ENCODE measurements at regions of chr6 and their contacts with region 1.

Region 1: GRCh38 chr6:31143148-31143547 is 4.3 kb upstream of the PSORS1C2 start:
- DNase-seq: peak; percentile 89

Region 2: DNA sequence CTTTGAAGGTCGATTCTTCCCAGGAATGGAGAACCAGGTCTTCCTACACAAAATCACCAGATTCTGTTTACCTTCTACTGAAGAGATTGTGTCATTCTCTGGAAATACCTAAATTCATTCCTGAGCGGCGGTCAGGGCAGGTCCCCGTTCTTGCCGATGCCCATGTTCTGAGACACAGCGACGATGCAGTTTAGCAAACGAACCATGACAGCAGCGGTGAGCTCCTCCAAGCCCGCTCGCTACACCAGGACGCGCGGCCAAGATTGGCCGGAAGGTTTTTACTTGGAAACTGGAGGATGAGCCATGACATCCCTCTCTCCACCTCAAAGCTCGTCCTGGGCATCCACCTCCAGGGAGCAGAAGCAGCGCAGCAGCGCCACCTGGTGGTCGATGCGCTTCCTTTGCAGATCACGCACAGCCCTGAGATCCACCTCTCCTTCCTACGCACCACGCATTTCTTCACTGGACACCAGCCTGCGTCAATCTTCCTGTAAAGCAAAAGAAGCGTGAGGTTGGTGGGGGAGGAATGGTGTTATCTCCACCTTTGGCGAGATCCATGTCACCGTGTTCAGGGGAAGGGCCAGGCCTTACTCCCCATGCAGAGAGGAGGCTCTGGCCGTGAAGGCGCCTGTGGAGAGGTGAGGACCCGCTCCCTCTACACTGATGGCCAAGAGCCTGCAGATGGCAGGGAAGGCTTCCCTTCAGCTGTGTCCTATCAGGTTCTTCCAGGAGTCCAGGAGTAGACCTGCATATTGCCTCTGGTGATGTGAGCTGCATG is 223.7 kb after region 1 on chr6:
- intact Hi-C with region 1: loop called (anchors 5 kb)
- DNase-seq: peak; percentile 98